Heart right ventricle (tissue), 16 donors: ENCODE measurements at regions of chr12 and their contacts with region 1.

Region 1: GRCh38 chr12:104877123-104877705 is 80.9 kb downstream of the SLC41A2 start:
- DNase-seq: peak; percentile 23 to 51
- ATAC-seq: peak in 6 of 8 donors; percentile 57 to 78 (median 70)
- H3K4me3 ChIP-seq: no peak overlapping the region
- H3K27ac ChIP-seq: no peak overlapping the region
- H3K4me1 ChIP-seq: peaks cover 0 to 5% (median 0%) of the 10 kb centered on the region in 9 donors
- H3K27me3 ChIP-seq: no peaks in the 10 kb centered on the region
- CTCF ChIP-seq: peak; percentile 48 to 86 (median 74)

Region 2: GRCh38 chr12:104189915-104190555 is 687.2 kb before region 1 on chr12:
- intact Hi-C with region 1: loop called in 1 of 10 experiments (anchors 10 kb)
- DNase-seq: no peak
- ATAC-seq: no peak
- H3K4me3 ChIP-seq: no peak overlapping the region
- H3K27ac ChIP-seq: no peak overlapping the region
- H3K4me1 ChIP-seq: no peaks in the 10 kb centered on the region
- H3K27me3 ChIP-seq: no peaks in the 10 kb centered on the region
- CTCF ChIP-seq: no peak

Region 3: DNA sequence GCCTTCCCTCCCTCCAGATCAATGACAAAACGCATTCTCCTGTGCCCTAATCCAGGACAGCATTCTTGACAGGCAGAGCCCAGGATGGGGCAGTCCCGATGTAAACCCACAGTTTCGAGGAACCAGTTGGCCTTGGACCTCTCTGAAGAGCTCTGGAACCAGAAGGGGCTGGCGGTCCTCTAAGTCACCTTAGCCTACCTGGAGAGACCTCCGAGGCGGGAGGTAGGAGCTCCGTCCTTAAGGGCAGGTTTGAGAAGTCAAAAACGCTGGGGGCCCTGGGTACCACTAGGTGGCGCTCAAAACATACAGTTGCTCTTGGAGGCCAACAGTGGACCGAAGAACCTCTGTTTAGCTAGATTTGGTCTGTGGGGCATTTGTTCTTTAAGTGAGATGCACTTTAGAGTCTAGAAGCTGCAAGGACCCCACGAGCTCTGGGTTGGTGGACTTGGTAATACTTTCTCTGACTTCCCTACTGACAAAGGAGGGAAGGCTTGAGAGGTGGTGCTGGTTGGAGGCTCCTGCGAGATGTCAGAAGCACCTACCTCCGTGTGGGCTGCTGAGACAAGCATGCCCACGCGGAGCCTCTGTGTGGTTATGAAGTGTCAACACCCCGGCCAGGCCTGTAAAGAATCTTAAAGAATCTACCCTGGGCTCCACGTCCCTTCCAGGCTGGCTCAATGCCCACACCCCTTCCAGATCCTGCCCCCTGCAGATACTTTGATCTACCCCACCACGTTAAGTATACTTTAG is 495.3 kb before region 1 on chr12:
- intact Hi-C with region 1: loop called (anchors 1 to 5 kb)
- DNase-seq: peak; percentile 73 to 80
- ATAC-seq: peak; percentile 72 to 92 (median 88)
- H3K4me3 ChIP-seq: no peak overlapping the region
- H3K27ac ChIP-seq: no peak overlapping the region
- H3K4me1 ChIP-seq: peaks cover 0 to 10% (median 0%) of the 10 kb centered on the region in 9 donors
- H3K27me3 ChIP-seq: peaks cover 0 to 4% (median 0%) of the 10 kb centered on the region in 7 donors
- CTCF ChIP-seq: peak; percentile 91 to 99 (median 96)

Region 4: DNA sequence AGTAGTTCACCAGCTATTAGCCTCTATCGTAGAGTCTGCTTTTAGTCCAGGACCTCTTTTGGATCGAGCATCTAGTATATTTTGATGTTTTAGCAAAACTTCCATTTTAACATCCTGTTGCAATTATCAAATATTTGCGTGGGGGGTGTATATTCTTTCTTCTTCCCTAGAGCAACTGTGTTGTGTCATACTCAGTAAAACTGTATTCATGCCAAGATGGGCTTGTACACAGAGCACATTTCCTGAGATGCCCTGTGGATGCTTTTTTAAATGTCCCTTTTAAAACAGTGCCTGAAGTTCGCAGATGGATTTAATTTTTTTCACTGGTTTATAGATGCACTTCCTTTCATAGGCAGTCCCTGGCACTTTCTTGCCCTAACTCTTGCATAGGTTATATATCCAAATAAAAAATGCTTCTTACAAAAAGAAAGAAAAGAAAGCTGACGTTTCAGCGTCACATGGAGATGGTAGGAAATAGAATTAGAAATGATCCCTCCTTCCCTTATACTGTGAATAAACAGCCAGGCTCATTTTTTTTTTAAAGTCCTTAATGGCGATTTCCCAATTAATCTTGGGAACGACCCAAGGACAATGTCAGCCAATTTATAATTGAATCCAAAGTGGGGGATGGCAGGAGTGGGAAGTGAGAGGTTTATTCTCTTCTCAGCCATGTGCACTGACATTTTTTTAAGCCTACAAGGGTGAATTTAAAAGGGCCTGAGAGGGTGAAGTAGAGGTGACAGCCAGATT is 166.1 kb before region 1 on chr12:
- intact Hi-C with region 1: no loop called
- DNase-seq: no peak
- ATAC-seq: peak in 7 of 8 donors; percentile 41 to 72 (median 60)
- H3K4me3 ChIP-seq: no peak overlapping the region
- H3K27ac ChIP-seq: no peak overlapping the region
- H3K4me1 ChIP-seq: peaks cover 3 to 29% (median 15%) of the 10 kb centered on the region in 9 donors
- H3K27me3 ChIP-seq: no peaks in the 10 kb centered on the region
- CTCF ChIP-seq: no peak

Region 5: DNA sequence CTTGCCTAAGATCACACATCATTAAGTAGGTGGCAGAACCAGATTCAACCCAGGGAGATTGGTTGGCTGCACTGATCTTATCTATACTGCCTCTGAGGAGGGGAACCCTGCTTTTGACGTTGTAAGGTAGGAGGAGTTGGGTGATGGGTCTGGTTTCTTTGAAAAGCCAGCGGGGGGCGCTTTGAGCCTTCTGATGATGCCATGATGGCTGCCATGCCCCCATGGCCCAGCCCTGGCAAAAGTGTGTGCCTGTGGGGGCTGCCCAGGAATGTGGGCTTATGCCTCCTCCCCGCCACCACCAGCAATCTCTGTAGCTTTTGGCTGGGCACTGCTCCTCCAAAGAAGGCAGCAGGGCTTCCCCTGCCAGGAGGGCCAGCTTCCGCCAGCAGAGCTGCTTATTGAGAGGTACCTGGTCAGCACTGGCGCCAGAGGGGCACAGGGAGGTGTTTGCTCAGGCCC is 143.5 kb before region 1 on chr12:
- intact Hi-C with region 1: loop called in 2 of 10 experiments (anchors 5 to 10 kb)
- DNase-seq: no peak
- ATAC-seq: peak in 3 of 8 donors; percentile 25 to 52 (median 31)
- H3K4me3 ChIP-seq: no peak overlapping the region
- H3K27ac ChIP-seq: no peak overlapping the region
- H3K4me1 ChIP-seq: peaks cover 0 to 43% (median 4%) of the 10 kb centered on the region in 9 donors
- H3K27me3 ChIP-seq: no peaks in the 10 kb centered on the region
- CTCF ChIP-seq: peak in 4 of 9 donors; percentile 25 to 32 (median 28)

Region 6: DNA sequence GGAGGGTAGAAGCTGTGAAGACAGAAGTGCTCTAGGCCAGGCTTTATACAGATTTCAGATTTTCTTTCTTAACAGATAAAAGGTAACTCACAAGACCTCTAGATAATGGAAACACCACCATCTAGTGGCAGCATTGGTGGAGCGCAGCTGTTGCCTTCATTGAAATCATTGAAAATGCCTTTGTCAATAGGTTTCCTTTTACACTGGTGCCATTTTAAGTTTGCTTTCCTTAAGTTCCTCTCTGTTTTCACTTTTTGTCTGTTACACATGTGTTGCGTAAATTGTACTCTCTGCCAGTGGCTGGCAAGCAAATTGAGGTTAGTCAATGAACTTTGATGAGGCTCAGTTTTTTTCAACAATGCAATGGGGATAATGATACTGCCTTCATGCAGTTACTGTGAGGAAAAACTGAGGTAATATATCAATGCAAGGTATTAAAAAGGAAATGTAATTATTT is 175.9 kb after region 1 on chr12:
- intact Hi-C with region 1: loop called in 2 of 10 experiments (anchors 5 to 10 kb)
- DNase-seq: peak; percentile 51 to 55
- ATAC-seq: peak in 5 of 8 donors; percentile 39 to 63 (median 47)
- H3K4me3 ChIP-seq: no peak overlapping the region
- H3K27ac ChIP-seq: no peak overlapping the region
- H3K4me1 ChIP-seq: peaks cover 0 to 4% (median 0%) of the 10 kb centered on the region in 9 donors
- H3K27me3 ChIP-seq: no peaks in the 10 kb centered on the region
- CTCF ChIP-seq: peak; percentile 71 to 96 (median 91)

Region 7: DNA sequence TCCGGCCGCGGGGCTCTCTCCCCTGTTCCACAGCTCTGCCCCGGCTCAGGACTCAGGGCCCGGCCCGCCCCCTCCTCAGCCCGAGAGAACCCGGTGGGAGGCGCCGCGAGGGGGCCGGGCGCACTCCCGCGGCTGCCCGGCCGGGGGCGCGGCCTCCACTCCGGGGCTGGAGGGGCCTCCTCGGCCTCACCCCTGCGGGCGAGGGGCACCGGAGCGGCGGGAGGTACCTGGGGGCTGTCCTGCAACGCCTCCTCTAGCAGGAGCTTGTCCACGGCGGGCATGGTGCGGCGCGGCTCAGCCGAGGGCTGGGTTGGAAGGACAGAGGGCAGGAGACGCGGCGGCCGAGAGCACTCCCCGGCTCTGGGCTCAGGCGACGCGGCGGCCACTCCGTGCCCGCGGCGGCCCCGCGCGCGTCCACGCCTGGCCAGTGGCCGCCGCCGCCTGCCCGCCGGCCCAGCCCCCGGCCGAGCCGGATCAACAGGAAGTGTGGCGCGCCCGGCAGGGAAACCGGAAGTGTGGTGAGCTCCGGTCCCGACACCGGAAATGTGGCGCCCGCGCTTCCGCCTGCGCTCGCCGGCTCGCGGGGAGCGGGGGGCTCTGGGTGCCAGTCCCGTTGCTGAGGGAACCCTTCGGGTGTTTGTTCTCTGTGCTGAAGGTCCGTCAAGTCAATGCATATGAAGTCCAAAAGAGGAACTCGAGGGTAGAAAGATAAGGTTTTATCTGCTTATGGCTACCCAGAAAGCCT is 358.7 kb after region 1 on chr12 and contains the start of gene APPL2:
- intact Hi-C with region 1: no loop called
- DNase-seq: peak; percentile 94
- ATAC-seq: peak; percentile 93 to 98 (median 96)
- H3K4me3 ChIP-seq: peak within 1 kb of the TSS; percentile 58 to 99 (median 86)
- H3K27ac ChIP-seq: peak within 1 kb of the TSS; percentile 91 to 98 (median 96)
- H3K4me1 ChIP-seq: peaks cover 9 to 54% (median 43%) of the 10 kb centered on the region in 9 donors
- H3K27me3 ChIP-seq: no peaks in the 10 kb centered on the region
- CTCF ChIP-seq: peak; percentile 7 to 57 (median 44)
- total RNA-seq, gene APPL2: 14.1 to 28.9 (median 19.4) TPM